Right cardiac atrium (tissue), 5 donors: ENCODE measurements at regions of chr12 and their contacts with region 1.

Region 1: GRCh38 chr12:4538207-4539160 is at the start of gene RAD51AP1:
- DNase-seq: peak; percentile 96 to 98 (median 97)
- ATAC-seq: peak; percentile 100
- H3K4me3 ChIP-seq: peak within 1 kb of the TSS; percentile 100
- H3K27ac ChIP-seq: peak within 1 kb of the TSS; percentile 98
- H3K4me1 ChIP-seq: no peaks in the 10 kb centered on the region
- H3K27me3 ChIP-seq: no peaks in the 10 kb centered on the region
- total RNA-seq, gene RAD51AP1: 0.28 to 1.9 (median 1.5) TPM

Region 2: DNA sequence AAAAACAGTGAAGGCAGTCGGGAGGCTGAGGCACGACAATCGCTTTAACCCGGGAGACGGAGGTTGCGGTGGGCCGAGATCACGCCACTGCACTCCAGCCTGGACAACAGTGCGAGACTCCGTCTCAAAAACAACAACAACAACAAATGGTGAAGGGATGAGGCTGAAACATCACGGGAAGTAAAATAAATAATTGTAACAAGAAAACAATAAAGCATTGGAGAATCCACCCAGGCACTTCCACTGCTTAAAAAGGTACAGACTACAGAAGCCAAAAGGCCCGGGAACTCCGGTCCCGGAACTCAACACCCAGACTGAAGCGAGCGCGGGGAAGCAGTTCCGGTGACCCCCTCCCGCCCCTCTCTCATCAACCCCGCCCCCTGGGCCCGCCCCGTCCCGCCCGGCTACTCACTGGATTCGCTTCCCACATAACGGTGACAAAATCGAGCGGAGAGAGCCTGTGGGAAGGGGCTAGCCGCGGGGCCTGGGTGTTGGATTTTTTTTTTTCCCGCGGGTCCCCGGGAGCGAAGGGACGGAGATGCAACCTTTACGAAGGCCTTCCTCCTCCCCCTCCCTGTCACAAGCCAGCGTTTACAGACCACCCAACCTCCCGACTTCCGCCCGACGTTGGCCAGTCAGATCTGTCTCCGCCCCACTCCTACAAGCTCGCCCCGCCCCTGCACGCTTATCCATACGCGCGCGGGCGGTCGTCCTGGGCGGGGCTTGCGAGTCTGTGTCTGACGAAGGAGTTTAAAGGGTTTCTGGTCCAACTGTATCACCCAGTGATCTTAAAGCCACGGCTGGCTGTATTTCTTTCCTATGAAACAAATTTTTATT is 665.5 kb before region 1 on chr12 and contains the start of gene PARP11:
- intact Hi-C with region 1: loop called in 1 of 4 experiments (anchors 5 kb)
- DNase-seq: peak; percentile 98 to 100 (median 99)
- ATAC-seq: peak; percentile 100
- H3K4me3 ChIP-seq: peak within 1 kb of the TSS; percentile 77
- H3K27ac ChIP-seq: peak within 1 kb of the TSS; percentile 98
- H3K4me1 ChIP-seq: peaks cover 2% of the 10 kb centered on the region
- H3K27me3 ChIP-seq: no peaks in the 10 kb centered on the region
- total RNA-seq, gene PARP11: 5.7 to 8.6 (median 6.6) TPM

Region 3: GRCh38 chr12:4356041-4356327 is 182.5 kb before region 1 on chr12:
- intact Hi-C with region 1: loop called in 1 of 4 experiments (anchors 5 kb)
- DNase-seq: peak in 2 of 3 donors; percentile 15 to 58
- ATAC-seq: peak in 1 of 2 donors; percentile 29
- H3K4me3 ChIP-seq: no peak overlapping the region
- H3K27ac ChIP-seq: peak overlapping the region; percentile 80
- H3K4me1 ChIP-seq: peaks cover 5% of the 10 kb centered on the region
- H3K27me3 ChIP-seq: no peaks in the 10 kb centered on the region

Region 4: DNA sequence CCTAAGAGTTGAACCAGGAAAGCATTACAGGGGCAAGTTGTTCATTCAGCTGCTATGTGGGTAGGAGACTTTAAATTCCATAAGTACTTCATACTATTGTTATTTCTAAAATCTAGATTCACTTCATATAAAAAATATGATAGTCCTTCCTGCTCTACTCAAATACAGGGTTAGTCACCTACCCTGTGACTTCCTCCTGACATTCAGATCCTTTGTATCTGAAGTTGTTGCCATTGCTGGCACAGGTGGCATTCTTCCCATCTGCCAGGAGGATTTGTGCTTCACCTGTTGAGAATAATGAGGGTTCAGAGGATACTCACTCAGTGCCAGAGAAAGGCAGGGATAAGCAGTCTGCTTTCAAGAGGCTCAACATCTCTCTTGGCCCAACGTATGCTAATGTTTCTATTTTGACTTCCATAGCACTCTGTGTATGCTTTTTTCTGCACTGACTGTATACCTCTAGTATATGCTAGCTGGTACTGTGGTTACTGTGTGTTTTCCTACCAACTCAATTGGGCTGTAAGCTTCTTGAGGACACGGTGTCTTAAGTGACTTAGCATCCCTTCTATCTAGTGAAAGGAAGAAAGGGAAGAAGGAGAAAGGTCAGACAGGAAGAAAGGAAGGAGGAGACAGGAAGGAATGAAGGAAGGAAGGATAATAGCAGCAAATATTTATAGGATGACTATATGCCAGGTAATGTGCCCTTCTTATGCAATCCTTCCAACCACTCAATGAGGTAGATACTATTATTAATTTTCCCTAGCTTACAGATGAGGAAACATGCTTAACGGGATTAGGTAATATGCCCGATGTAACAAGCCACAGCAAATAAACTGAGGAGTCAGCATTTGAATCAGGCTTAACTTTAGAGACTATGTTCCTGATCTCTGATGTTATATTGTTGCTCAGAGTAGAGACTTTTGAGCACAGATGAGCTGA is 54.3 kb before region 1 on chr12:
- intact Hi-C with region 1: no loop called
- DNase-seq: no peak
- ATAC-seq: no peak
- H3K4me3 ChIP-seq: no peak overlapping the region
- H3K27ac ChIP-seq: no peak overlapping the region
- H3K4me1 ChIP-seq: no peaks in the 10 kb centered on the region
- H3K27me3 ChIP-seq: no peaks in the 10 kb centered on the region

Region 5: GRCh38 chr12:4496145-4496838 is 42.2 kb before region 1 on chr12:
- intact Hi-C with region 1: no loop called
- DNase-seq: no peak
- ATAC-seq: no peak
- H3K4me3 ChIP-seq: no peak overlapping the region
- H3K27ac ChIP-seq: no peak overlapping the region
- H3K4me1 ChIP-seq: no peaks in the 10 kb centered on the region
- H3K27me3 ChIP-seq: no peaks in the 10 kb centered on the region